Aorta (tissue), 5 donors: ENCODE measurements at regions of chr4 and their contacts with region 1.

Region 1: DNA sequence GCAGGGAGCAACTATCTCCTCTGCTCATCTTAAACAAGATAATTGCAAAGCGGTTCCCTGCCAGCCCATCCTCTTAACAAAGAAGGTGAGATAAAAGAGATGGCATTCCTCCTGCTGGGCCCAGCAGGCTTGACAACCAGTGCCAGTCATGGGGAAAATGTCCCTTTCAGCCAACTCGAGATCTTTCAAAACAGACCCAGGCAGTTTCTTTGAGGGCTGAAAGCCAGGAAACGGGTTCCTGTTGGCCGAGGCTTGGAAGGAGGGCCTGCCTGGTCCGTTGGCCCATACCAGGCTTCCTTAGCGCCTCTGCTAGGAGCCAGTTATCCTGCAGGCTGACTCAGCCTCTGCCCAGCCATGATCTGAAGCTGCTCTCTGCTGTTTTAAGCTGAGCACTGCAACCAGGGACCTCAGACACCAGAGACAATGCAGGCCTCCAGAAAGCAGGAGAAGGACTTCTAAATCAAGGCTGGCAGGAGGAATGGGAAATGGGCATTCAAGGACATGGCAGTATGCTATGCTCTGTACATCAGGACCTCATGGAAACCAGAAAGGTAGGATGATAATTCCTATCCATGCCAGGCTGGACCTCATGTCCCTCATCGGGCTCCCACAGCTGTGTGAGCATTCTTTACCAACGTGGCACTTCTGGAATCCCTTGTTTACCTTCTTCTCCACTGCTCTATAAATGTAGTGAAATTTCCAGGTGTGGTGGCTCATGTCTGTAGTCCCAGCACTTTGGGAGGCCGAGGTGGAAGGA is 42.4 kb upstream of the SLC2A9 start:
- DNase-seq: peak; percentile 87 to 90
- ATAC-seq: peak; percentile 95
- H3K4me3 ChIP-seq: no peak overlapping the region
- H3K27ac ChIP-seq: no peak overlapping the region
- H3K4me1 ChIP-seq: no peaks in the 10 kb centered on the region
- H3K27me3 ChIP-seq: no peaks in the 10 kb centered on the region

Region 2: GRCh38 chr4:9762823-9763475 is 300.8 kb before region 1 on chr4:
- intact Hi-C with region 1: loop called (anchors 2 to 10 kb)
- DNase-seq: no peak
- ATAC-seq: no peak
- H3K4me3 ChIP-seq: no peak overlapping the region
- H3K27ac ChIP-seq: no peak overlapping the region
- H3K4me1 ChIP-seq: no peaks in the 10 kb centered on the region
- H3K27me3 ChIP-seq: peaks cover 0 to 1% of the 10 kb centered on the region in 2 donors

Region 3: GRCh38 chr4:9994246-9994847 is 69.4 kb before region 1 on chr4:
- intact Hi-C with region 1: no loop called
- DNase-seq: no peak
- ATAC-seq: no peak
- H3K4me3 ChIP-seq: no peak overlapping the region
- H3K27ac ChIP-seq: no peak overlapping the region
- H3K4me1 ChIP-seq: no peaks in the 10 kb centered on the region
- H3K27me3 ChIP-seq: no peaks in the 10 kb centered on the region

Region 4: DNA sequence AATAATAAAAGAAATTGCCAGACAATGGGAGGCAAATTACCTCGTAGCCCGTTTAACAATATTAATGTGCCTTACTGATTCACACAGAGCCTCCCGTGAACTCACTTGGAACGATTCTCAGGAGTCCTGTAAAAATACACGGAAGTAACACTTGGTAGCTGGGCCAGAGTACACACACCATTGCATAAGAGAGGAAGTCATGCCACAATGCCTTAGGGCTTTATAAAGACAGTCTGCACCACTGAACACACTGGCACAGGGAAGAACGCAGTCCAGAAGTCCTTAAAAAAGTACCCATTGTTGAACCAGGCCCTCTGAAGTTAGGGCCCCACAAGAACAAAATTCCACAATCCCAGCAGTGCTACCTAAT is 57.5 kb before region 1 on chr4:
- intact Hi-C with region 1: no loop called
- DNase-seq: peak in 1 of 2 donors; percentile 58
- ATAC-seq: peak; percentile 90
- H3K4me3 ChIP-seq: no peak overlapping the region
- H3K27ac ChIP-seq: peak overlapping the region in 1 of 2 donors; percentile 81
- H3K4me1 ChIP-seq: peaks cover 0 to 11% of the 10 kb centered on the region in 2 donors
- H3K27me3 ChIP-seq: no peaks in the 10 kb centered on the region

Region 5: DNA sequence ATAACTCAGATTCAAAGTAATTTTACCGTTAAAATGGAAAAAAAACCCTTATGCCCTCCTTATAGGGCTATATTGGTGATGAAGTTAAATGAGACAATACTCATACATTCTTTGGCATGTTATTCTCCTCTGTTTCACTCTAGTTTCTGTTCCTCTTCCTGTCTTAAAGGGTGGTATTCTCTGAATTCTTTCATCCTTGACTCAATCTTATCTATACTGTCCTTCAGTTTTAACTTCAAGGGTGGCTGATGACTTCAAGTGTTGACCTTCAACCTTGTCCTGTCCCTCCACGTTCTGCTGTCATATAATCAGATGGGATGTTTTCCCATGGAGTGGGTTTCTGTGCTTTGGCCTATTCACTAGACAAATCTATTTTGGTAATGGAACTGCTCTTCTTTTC is 349.5 kb after region 1 on chr4:
- intact Hi-C with region 1: no loop called
- DNase-seq: no peak
- ATAC-seq: no peak
- H3K4me3 ChIP-seq: no peak overlapping the region
- H3K27ac ChIP-seq: no peak overlapping the region
- H3K4me1 ChIP-seq: no peaks in the 10 kb centered on the region
- H3K27me3 ChIP-seq: no peaks in the 10 kb centered on the region